ENCODE measurements at regions of chr15 and their contacts with region 1.

Region 1: GRCh38 chr15:64355944-64356709 is at the start of gene CSNK1G1:
- DNase-seq: peak; percentile 96
- ATAC-seq: peak; percentile 100
- total RNA-seq, gene CSNK1G1: 5.5 TPM

Region 2: GRCh38 chr15:64162870-64163658 is 193.1 kb before region 1 on chr15 and contains the start of gene PPIB:
- intact Hi-C with region 1: loop called (anchors 10 kb)
- DNase-seq: peak; percentile 99
- ATAC-seq: peak; percentile 97
- total RNA-seq, gene PPIB: 127 TPM

Region 3: DNA sequence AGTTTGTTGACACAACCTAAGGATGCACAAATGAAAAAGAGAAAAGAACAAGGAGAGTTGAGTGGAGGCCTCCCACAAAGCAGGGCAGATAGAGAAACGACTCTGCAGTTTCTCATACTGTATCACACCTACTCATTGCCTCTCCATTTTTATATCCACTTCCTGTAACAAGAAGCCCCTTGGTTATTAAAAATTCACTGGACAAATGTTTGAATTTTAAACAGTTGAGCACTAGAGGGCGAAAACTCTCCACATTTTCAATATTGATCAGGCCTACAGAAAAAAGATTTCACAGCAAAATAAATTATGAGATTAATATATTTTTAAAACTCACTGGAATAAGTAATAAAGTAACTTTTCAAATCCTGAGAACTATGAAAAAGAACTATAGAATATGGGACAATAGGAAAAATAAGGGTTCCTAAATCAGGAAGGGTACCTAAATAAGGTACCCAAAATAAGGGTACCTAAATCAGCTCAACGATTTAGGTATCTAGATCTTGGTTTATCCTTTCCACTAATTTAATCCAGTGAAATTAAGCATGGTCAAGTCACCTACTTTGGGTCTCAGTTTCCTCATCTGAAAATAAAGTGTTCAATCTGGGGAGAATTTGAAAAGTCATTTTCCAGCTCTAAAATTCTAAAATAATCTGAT is 146.3 kb before region 1 on chr15:
- intact Hi-C with region 1: loop called (anchors 2 kb)
- DNase-seq: no peak
- ATAC-seq: no peak

Region 4: GRCh38 chr15:64284042-64284441 is 72.1 kb before region 1 on chr15:
- intact Hi-C with region 1: no loop called
- DNase-seq: no peak
- ATAC-seq: no peak

Region 5: DNA sequence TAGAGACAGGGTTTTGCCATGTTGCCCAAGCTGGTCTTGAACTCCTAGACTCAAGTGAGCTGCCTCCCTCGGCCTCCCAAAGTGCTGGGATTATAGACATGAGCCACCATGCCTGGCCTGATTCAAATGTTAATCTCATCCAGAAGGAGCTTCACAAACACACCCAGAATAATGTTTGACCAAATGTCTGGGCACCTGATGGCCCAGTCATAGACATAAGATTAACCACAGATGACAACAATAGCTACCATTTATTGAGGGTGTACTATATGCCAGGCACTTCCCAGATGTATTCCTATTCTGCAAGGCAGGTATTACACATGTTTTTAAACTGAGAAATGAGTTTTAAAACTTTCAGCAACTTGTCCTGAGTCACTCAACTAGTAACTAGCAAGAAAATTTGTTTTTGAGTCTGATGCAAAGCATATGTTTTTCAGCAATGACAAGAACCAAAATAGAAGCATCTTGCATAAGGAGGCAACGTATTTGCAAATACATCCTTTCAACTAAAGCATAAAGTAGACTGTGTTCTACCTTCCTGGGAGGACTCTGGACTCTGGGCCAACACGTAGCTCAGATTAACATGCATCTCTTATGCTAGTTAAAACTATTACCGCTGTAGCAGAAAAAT is 641.7 kb after region 1 on chr15:
- intact Hi-C with region 1: no loop called
- DNase-seq: no peak
- ATAC-seq: no peak

Measured in Right ventricle myocardium inferior (tissue), 1 donor.